Panc1 (cell line): ENCODE measurements at regions of chr4 and their contacts with region 1.

Region 1: DNA sequence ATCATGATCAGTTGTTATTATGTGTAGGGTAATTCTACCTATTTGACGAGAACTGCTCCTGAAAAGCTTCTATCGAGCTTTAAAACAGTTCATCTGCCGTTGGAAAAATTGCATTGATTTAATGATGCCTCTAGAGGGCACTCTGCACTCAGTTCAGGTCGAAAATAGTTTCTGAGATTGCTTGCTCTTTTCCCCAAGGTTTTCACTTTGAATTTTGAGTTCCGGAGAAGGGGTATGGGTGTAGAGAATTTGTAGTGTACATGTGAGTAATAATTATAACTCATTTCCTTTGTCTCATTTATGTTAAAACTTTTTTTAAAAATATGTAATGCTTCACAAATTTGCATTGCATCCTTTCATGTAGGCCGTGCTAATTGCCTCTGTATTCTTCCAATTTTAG is 28.4 kb upstream of the TNIP3 start:
- DNase-seq: peak; percentile 15
- ATAC-seq: no peak
- H3K4me3 ChIP-seq: no peak overlapping the region
- H3K27ac ChIP-seq: no peak overlapping the region
- H3K4me1 ChIP-seq: no peaks in the 10 kb centered on the region
- H3K27me3 ChIP-seq: no peaks in the 10 kb centered on the region
- CTCF ChIP-seq: peak; percentile 77; the same call in 1 of the 2 replicates

Region 2: GRCh38 chr4:121252224-121252806 is 59.8 kb after region 1 on chr4:
- CTCF ChIA-PET with region 1: interaction called, 3 read pairs
- POLR2A ChIA-PET with region 1: no interaction called
- in situ Hi-C with region 1: no loop called
- intact Hi-C with region 1: loop called (anchors 2 kb)
- DNase-seq: peak; percentile 42
- ATAC-seq: peak; percentile 73; the same call in 1 of the 2 replicates
- H3K4me3 ChIP-seq: no peak overlapping the region
- H3K27ac ChIP-seq: no peak overlapping the region
- H3K4me1 ChIP-seq: no peaks in the 10 kb centered on the region
- H3K27me3 ChIP-seq: no peaks in the 10 kb centered on the region
- CTCF ChIP-seq: peak; percentile 78

Region 3: GRCh38 chr4:121380776-121381462 is 188.4 kb after region 1 on chr4 and contains the start of gene QRFPR:
- CTCF ChIA-PET with region 1: no interaction called
- POLR2A ChIA-PET with region 1: no interaction called
- in situ Hi-C with region 1: no loop called
- intact Hi-C with region 1: no loop called
- DNase-seq: no peak
- ATAC-seq: 0 out of 2 replicates have a peak, but pooled peaks have one; percentile 60
- H3K4me3 ChIP-seq: no peak within 1 kb of the TSS; a peak in 1 of 4 replicates
- H3K27ac ChIP-seq: no peak within 1 kb of the TSS
- H3K4me1 ChIP-seq: no peaks in the 10 kb centered on the region
- H3K27me3 ChIP-seq: peaks cover 14% of the 10 kb centered on the region
- CTCF ChIP-seq: no peak
- total RNA-seq, gene QRFPR: not detected